Endothelial cell of umbilical vein (primary cell): ENCODE measurements at regions of chr7 and their contacts with region 1.

Region 1: GRCh38 chr7:138886501-138886917 is 88.5 kb upstream of the ATP6V0A4 start:
- DNase-seq: peak; percentile 84
- H3K4me3 ChIP-seq: no peak overlapping the region
- H3K27ac ChIP-seq: no peak overlapping the region
- H3K4me1 ChIP-seq: no peaks in the 10 kb centered on the region
- H3K27me3 ChIP-seq: no peaks in the 10 kb centered on the region
- CTCF ChIP-seq: peak; percentile 45 to 52
- POLR2A ChIP-seq: no peak

Region 2: GRCh38 chr7:138825049-138825721 is 61.3 kb before region 1 on chr7:
- CTCF ChIA-PET with region 1: no interaction called
- POLR2A ChIA-PET with region 1: no interaction called
- dilution Hi-C with region 1: no loop called
- intact Hi-C with region 1: no loop called
- DNase-seq: no peak
- H3K4me3 ChIP-seq: no peak overlapping the region
- H3K27ac ChIP-seq: no peak overlapping the region
- H3K4me1 ChIP-seq: no peaks in the 10 kb centered on the region
- H3K27me3 ChIP-seq: no peaks in the 10 kb centered on the region
- CTCF ChIP-seq: no peak
- POLR2A ChIP-seq: no peak

Region 3: GRCh38 chr7:138898255-138898654 is 11.7 kb after region 1 on chr7:
- CTCF ChIA-PET with region 1: interaction called, 48 read pairs
- POLR2A ChIA-PET with region 1: no interaction called
- dilution Hi-C with region 1: no loop called
- intact Hi-C with region 1: no loop called
- DNase-seq: peak; percentile 63
- H3K4me3 ChIP-seq: no peak overlapping the region
- H3K27ac ChIP-seq: no peak overlapping the region
- H3K4me1 ChIP-seq: peaks cover 8% of the 10 kb centered on the region
- H3K27me3 ChIP-seq: no peaks in the 10 kb centered on the region
- CTCF ChIP-seq: no peak
- POLR2A ChIP-seq: no peak

Region 4: DNA sequence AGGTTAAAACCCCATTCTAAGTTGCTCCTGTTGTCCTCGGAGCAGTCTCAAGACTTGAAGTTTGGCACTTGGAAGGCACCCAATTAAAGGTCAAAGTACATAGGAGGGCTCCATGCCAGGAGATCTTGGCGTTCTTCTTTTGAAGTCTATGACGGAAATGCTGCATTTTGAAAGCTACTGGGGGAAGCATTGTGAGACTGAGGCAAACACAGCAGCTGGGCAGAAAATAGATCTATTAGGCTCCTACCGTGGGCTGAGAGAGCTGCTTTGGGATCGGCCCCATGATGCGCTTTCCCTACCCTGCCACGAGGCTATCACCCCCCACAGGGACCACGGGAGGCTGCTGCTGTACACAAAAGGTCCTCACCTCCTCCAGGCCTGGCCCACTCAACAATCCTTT is 74.7 kb after region 1 on chr7:
- CTCF ChIA-PET with region 1: interaction called, 12 read pairs
- POLR2A ChIA-PET with region 1: no interaction called
- dilution Hi-C with region 1: no loop called
- intact Hi-C with region 1: no loop called
- DNase-seq: peak; percentile 39
- H3K4me3 ChIP-seq: no peak overlapping the region
- H3K27ac ChIP-seq: no peak overlapping the region
- H3K4me1 ChIP-seq: peaks cover 4% of the 10 kb centered on the region
- H3K27me3 ChIP-seq: no peaks in the 10 kb centered on the region
- CTCF ChIP-seq: no peak
- POLR2A ChIP-seq: no peak

Region 5: GRCh38 chr7:138987686-138988085 is 101.2 kb after region 1 on chr7:
- CTCF ChIA-PET with region 1: interaction called, 117 read pairs
- POLR2A ChIA-PET with region 1: no interaction called
- dilution Hi-C with region 1: no loop called
- intact Hi-C with region 1: no loop called
- DNase-seq: no peak
- H3K4me3 ChIP-seq: no peak overlapping the region
- H3K27ac ChIP-seq: no peak overlapping the region
- H3K4me1 ChIP-seq: no peaks in the 10 kb centered on the region
- H3K27me3 ChIP-seq: peaks cover 7 to 8% of the 10 kb centered on the region in 2 experiments
- CTCF ChIP-seq: no peak
- POLR2A ChIP-seq: no peak

Region 6: GRCh38 chr7:139058943-139059342 is 172.4 kb after region 1 on chr7:
- CTCF ChIA-PET with region 1: interaction called, 15 read pairs
- POLR2A ChIA-PET with region 1: no interaction called
- dilution Hi-C with region 1: no loop called
- intact Hi-C with region 1: no loop called
- DNase-seq: peak; percentile 81
- H3K4me3 ChIP-seq: no peak overlapping the region
- H3K27ac ChIP-seq: peak overlapping the region; percentile 67
- H3K4me1 ChIP-seq: peaks cover 23% of the 10 kb centered on the region
- H3K27me3 ChIP-seq: no peaks in the 10 kb centered on the region
- CTCF ChIP-seq: no peak
- POLR2A ChIP-seq: no peak

Region 7: DNA sequence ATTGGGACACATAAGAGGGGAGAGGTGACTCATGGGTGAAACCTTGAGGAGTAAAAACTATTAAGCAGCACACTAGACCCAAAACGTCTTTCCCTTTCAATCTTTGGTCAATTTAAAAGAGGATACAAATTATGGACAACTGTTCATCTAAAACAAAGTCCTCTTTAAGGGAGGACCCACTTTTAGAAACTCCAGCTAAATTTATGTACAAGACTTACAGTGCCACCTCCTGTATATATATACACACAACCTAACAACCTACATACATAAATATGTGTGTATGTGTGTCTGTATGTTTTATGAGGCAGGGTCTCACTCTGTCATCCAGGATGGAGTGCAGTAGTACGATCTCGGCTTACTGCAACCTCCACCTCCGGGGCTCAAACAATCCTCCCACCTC is 241.1 kb after region 1 on chr7:
- CTCF ChIA-PET with region 1: interaction called, 12 read pairs
- POLR2A ChIA-PET with region 1: no interaction called
- dilution Hi-C with region 1: no loop called
- intact Hi-C with region 1: no loop called
- DNase-seq: peak; percentile 23
- H3K4me3 ChIP-seq: no peak overlapping the region
- H3K27ac ChIP-seq: no peak overlapping the region
- H3K4me1 ChIP-seq: no peaks in the 10 kb centered on the region
- H3K27me3 ChIP-seq: peaks cover 15 to 18% of the 10 kb centered on the region in 2 experiments
- CTCF ChIP-seq: no peak
- POLR2A ChIP-seq: no peak